Common myeloid progenitor, CD34-positive (primary cell): ENCODE measurements at regions of chr5 and their contacts with region 1.

Region 1: GRCh38 chr5:446864-447263 is 3.9 kb downstream of the EXOC3 start:
- DNase-seq: peak; percentile 38 to 72 (median 66)
- H3K4me3 ChIP-seq: no peak overlapping the region
- H3K27ac ChIP-seq: no peak overlapping the region
- H3K4me1 ChIP-seq: peaks cover 0 to 50% (median 26%) of the 10 kb centered on the region in 4 experiments
- H3K27me3 ChIP-seq: no peaks in the 10 kb centered on the region

Region 2: DNA sequence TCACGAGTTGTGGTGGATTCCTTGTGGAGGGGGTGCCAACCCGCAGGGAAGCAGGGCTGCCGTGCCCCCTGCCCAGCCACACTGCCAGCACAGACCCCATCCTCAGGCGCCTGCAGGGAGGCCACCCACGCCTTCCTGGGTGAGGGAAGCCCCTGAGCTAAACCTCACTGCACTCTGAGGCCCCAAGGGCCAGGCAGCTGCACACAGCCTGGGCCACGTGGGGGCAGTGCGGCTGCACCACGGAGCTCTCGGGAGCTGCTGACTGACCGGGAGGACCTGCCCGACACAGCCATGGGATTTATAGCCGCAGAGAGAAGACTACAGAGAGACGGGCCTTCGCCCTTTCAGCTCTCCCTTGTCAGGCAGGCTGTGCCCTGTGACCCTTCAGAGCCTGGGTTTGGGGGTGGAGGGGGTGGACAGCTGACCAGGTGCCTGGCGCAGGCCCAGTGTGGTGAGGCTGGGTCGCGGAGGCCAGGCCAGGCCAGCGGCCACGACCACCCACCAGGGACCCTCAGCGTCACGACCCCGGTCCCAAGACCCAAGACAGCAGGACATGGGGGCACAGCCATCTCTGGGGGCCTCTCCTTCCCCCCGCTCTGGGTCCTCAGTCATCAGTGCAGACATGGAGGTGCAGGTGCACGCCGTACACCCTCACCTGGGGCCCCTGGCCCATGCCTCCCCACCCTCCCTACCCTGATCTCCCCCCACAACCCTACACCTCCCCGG is 129.6 kb before region 1 on chr5:
- CTCF ChIA-PET with region 1: interaction called, 14 read pairs
- POLR2A ChIA-PET with region 1: interaction called, 3 read pairs
- DNase-seq: peak; percentile 38 to 61 (median 56)
- H3K4me3 ChIP-seq: no peak overlapping the region
- H3K27ac ChIP-seq: no peak overlapping the region
- H3K4me1 ChIP-seq: peaks cover 0 to 38% (median 18%) of the 10 kb centered on the region in 4 experiments
- H3K27me3 ChIP-seq: peaks cover 0 to 41% (median 18%) of the 10 kb centered on the region in 5 experiments

Region 3: DNA sequence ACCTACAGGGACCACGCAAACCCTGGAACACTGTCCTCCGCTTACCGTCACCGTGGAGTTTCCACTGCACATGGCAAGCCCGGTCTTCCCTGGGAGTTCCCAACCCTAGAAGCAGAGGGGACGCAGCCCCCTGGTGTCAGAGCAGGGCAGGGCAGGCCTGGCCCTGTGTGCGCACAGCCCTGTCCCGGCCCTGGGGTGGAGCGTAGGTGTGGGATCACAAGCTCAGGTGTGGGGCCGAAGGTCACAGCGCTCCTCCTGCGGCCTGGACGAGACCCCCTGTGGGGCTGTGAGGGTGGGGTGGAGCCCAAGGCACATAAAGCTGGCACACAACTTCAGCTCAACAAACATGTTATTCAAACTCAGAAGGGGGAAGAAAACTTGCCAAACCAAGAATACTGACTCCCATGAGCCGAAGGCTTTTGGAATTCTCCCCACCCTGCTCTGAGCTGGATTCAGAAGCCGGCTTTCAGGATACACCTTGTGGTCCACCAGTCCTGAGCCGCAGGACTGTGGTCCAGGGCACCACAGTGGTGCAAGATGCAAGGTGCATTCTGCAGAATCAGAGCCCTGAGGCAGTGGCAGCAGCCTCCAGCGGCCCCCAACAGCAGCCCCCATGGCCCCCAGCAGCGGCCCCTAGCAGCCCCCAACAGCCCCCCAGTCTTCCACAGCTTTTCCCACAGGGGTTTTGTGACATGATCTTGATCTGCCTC is 15.7 kb before region 1 on chr5:
- CTCF ChIA-PET with region 1: interaction called, 14 read pairs
- POLR2A ChIA-PET with region 1: no interaction called
- DNase-seq: peak; percentile 43 to 57 (median 43)
- H3K4me3 ChIP-seq: no peak overlapping the region
- H3K27ac ChIP-seq: no peak overlapping the region
- H3K4me1 ChIP-seq: peaks cover 0 to 1% (median 0%) of the 10 kb centered on the region in 4 experiments
- H3K27me3 ChIP-seq: no peaks in the 10 kb centered on the region

Region 4: GRCh38 chr5:458547-459353 is 11.9 kb after region 1 on chr5:
- CTCF ChIA-PET with region 1: interaction called, 11 read pairs
- POLR2A ChIA-PET with region 1: no interaction called
- DNase-seq: no peak
- H3K4me3 ChIP-seq: no peak overlapping the region
- H3K27ac ChIP-seq: no peak overlapping the region
- H3K4me1 ChIP-seq: peaks cover 0 to 2% (median 0%) of the 10 kb centered on the region in 4 experiments
- H3K27me3 ChIP-seq: no peaks in the 10 kb centered on the region

Region 5: DNA sequence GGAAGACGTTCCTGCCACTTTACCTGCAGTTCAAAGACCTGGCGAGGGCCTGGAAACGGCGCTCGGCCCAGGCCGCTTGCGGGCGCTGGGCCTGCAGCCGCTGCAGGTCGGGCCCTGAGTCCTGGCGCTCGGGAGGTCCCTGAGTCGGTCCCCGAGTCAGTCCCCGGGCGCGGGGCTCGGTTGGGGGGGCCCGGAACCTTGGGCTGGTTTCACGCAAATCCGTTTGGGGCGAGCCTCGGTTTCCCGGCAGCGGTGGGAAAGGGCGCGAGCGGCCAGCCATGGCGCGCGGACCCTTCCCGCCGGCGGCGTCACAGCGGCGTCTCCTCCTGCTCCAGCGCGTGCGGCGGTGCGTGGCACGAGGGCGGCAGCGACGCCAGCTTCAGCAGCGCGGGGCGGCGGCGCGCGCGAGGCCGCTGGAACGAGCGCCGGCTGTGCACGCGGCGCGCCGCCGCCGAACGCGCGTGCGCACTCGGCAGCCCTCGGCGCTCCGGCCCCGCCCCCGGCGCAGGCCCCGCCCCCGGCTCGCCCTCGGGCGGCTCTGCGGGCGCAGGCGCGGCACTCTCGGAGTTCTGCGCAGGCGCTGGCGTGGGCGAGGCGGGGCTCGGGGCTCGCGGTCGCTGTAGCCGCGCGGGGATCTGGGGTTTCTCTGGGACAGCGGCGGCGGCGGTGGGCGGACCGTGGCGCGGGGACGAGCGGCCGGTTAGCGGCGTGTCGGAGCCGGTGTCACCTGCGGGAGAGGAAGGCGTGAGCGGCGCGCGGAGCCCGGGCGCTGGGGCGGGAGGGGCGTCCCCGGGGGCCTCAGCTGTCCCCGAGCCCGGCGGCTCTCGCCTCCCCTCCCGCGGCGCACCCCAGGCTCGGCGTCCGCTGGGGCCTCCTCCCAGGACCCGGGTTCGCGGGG is 26.0 kb after region 1 on chr5:
- CTCF ChIA-PET with region 1: interaction called, 17 read pairs
- POLR2A ChIA-PET with region 1: interaction called, 3 read pairs
- DNase-seq: peak; percentile 63 to 85 (median 81)
- H3K4me3 ChIP-seq: peak overlapping the region; percentile 65 to 81 (median 71)
- H3K27ac ChIP-seq: peak overlapping the region in 1 of 2 experiments; percentile 61
- H3K4me1 ChIP-seq: peaks cover 2 to 34% (median 30%) of the 10 kb centered on the region in 4 experiments
- H3K27me3 ChIP-seq: peaks cover 0 to 37% (median 5%) of the 10 kb centered on the region in 5 experiments